IMR-90 (cell line): ENCODE measurements at regions of chr1 and their contacts with region 1.

Region 1: GRCh38 chr1:115337633-115338456 is at the start of gene NGF:
- DNase-seq: peak; percentile 78
- ATAC-seq: peak; percentile 96
- H3K4me3 ChIP-seq: peak within 1 kb of the TSS; percentile 84
- H3K27ac ChIP-seq: peak within 1 kb of the TSS; percentile 45; the same call in 1 of the 2 replicates
- H3K4me1 ChIP-seq: peaks cover 5% of the 10 kb centered on the region
- H3K27me3 ChIP-seq: peaks cover 7% of the 10 kb centered on the region; the same call in 1 of the 2 replicates
- CTCF ChIP-seq: no peak
- POLR2A ChIP-seq: peak; percentile 86
- RAD21 ChIP-seq: peak; percentile 38
- total RNA-seq, gene NGF: 8.3 and 12.5 TPM in 2 replicates

Region 2: GRCh38 chr1:114540202-114540601 is 797.6 kb before region 1 on chr1:
- CTCF ChIA-PET with region 1: no interaction called
- POLR2A ChIA-PET with region 1: no interaction called
- dilution Hi-C with region 1: no loop called
- in situ Hi-C with region 1: no loop called
- intact Hi-C with region 1: no loop called
- DNase-seq: no peak
- ATAC-seq: no peak
- H3K4me3 ChIP-seq: no peak overlapping the region
- H3K27ac ChIP-seq: no peak overlapping the region
- H3K4me1 ChIP-seq: no peaks in the 10 kb centered on the region
- H3K27me3 ChIP-seq: peaks cover 3% of the 10 kb centered on the region; the same call in 1 of the 2 replicates
- CTCF ChIP-seq: no peak
- POLR2A ChIP-seq: no peak
- RAD21 ChIP-seq: no peak

Region 3: GRCh38 chr1:115166531-115167091 is 171.2 kb before region 1 on chr1:
- CTCF ChIA-PET with region 1: no interaction called
- POLR2A ChIA-PET with region 1: no interaction called
- dilution Hi-C with region 1: no loop called
- in situ Hi-C with region 1: loop called (anchors 10 kb)
- intact Hi-C with region 1: loop called (anchors 5 kb)
- DNase-seq: peak; percentile 70
- ATAC-seq: no peak
- H3K4me3 ChIP-seq: no peak overlapping the region
- H3K27ac ChIP-seq: no peak overlapping the region
- H3K4me1 ChIP-seq: peaks cover 17% of the 10 kb centered on the region
- H3K27me3 ChIP-seq: no peaks in the 10 kb centered on the region
- CTCF ChIP-seq: 0 out of 2 replicates have a peak, but pooled peaks have one; percentile 18
- POLR2A ChIP-seq: no peak
- RAD21 ChIP-seq: peak; percentile 36; the same call in 1 of the 2 replicates

Region 4: DNA sequence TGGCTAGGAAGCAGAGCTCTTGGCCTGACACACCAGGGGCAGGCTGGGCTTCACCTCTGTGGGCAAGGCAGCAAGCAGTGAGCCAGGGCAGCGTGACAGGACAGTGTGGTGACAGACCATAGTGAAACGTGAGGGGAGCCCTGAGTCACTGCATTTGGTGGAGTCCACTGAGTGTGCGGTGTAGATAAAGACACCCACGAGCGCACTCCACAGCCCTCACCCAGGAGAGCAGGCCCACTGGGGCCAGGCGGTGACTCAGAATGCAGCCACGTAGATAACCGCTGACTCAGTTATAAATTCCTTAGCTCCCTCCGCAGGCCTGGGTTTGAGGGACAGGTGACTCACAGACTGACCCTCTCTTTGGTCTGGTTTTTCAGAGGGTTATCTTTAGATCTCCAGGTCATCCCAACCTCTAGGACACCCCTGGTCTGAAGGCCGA is 158.4 kb before region 1 on chr1:
- CTCF ChIA-PET with region 1: no interaction called
- POLR2A ChIA-PET with region 1: no interaction called
- dilution Hi-C with region 1: no loop called
- in situ Hi-C with region 1: loop called (anchors 10 kb)
- intact Hi-C with region 1: no loop called
- DNase-seq: peak; percentile 98
- ATAC-seq: peak; percentile 95
- H3K4me3 ChIP-seq: no peak overlapping the region
- H3K27ac ChIP-seq: peak overlapping the region; percentile 62
- H3K4me1 ChIP-seq: peaks cover 10% of the 10 kb centered on the region
- H3K27me3 ChIP-seq: no peaks in the 10 kb centered on the region
- CTCF ChIP-seq: 0 out of 2 replicates have a peak, but pooled peaks have one; percentile 6
- POLR2A ChIP-seq: 0 out of 2 replicates have a peak, but pooled peaks have one; percentile 14
- RAD21 ChIP-seq: peak; percentile 33

Region 5: GRCh38 chr1:115262886-115263285 is 75.0 kb before region 1 on chr1:
- CTCF ChIA-PET with region 1: no interaction called
- POLR2A ChIA-PET with region 1: no interaction called
- dilution Hi-C with region 1: no loop called
- in situ Hi-C with region 1: no loop called
- intact Hi-C with region 1: no loop called
- DNase-seq: peak; percentile 21
- ATAC-seq: peak; percentile 46; the same call in 1 of the 2 replicates
- H3K4me3 ChIP-seq: no peak overlapping the region
- H3K27ac ChIP-seq: no peak overlapping the region
- H3K4me1 ChIP-seq: peaks cover 2% of the 10 kb centered on the region
- H3K27me3 ChIP-seq: no peaks in the 10 kb centered on the region
- CTCF ChIP-seq: no peak
- POLR2A ChIP-seq: no peak
- RAD21 ChIP-seq: no peak

Region 6: GRCh38 chr1:115275212-115275611 is 62.6 kb before region 1 on chr1:
- CTCF ChIA-PET with region 1: no interaction called
- POLR2A ChIA-PET with region 1: no interaction called
- dilution Hi-C with region 1: no loop called
- in situ Hi-C with region 1: no loop called
- intact Hi-C with region 1: loop called (anchors 5 kb)
- DNase-seq: peak; percentile 30
- ATAC-seq: no peak; the same call in 1 of the 2 replicates
- H3K4me3 ChIP-seq: no peak overlapping the region
- H3K27ac ChIP-seq: no peak overlapping the region
- H3K4me1 ChIP-seq: peaks cover 3% of the 10 kb centered on the region; the same call in 1 of the 2 replicates
- H3K27me3 ChIP-seq: no peaks in the 10 kb centered on the region
- CTCF ChIP-seq: peak; percentile 48
- POLR2A ChIP-seq: no peak
- RAD21 ChIP-seq: peak; percentile 49

Region 7: GRCh38 chr1:115379943-115380342 is 42.1 kb after region 1 on chr1:
- CTCF ChIA-PET with region 1: no interaction called
- POLR2A ChIA-PET with region 1: no interaction called
- dilution Hi-C with region 1: no loop called
- in situ Hi-C with region 1: loop called (anchors 5 kb)
- intact Hi-C with region 1: no loop called
- DNase-seq: no peak
- ATAC-seq: no peak
- H3K4me3 ChIP-seq: no peak overlapping the region
- H3K27ac ChIP-seq: no peak overlapping the region
- H3K4me1 ChIP-seq: peaks cover 5% of the 10 kb centered on the region
- H3K27me3 ChIP-seq: no peaks in the 10 kb centered on the region
- CTCF ChIP-seq: no peak
- POLR2A ChIP-seq: no peak
- RAD21 ChIP-seq: no peak

Region 8: GRCh38 chr1:115458426-115459114 is 120.7 kb after region 1 on chr1:
- CTCF ChIA-PET with region 1: no interaction called
- POLR2A ChIA-PET with region 1: no interaction called
- dilution Hi-C with region 1: no loop called
- in situ Hi-C with region 1: no loop called
- intact Hi-C with region 1: no loop called
- DNase-seq: no peak
- ATAC-seq: no peak
- H3K4me3 ChIP-seq: no peak overlapping the region
- H3K27ac ChIP-seq: no peak overlapping the region
- H3K4me1 ChIP-seq: peaks cover 16% of the 10 kb centered on the region
- H3K27me3 ChIP-seq: no peaks in the 10 kb centered on the region
- CTCF ChIP-seq: no peak
- POLR2A ChIP-seq: no peak
- RAD21 ChIP-seq: no peak